Dendritic cell treated with granulocyte-macrophage colony-stimulating factor and Interleukin-4, amounts not matched to agents 40 ng/mL and 50 ng/mL, for 4 days (primary cell): ENCODE measurements at regions of chr7 and their contacts with region 1.

Region 1: GRCh38 chr7:98168181-98168905 is 42.9 kb upstream of the BHLHA15 start:
- H3K4me3 Mint-ChIP-seq: no peak overlapping the region
- H3K27ac Mint-ChIP-seq: no peak overlapping the region
- H3K4me1 Mint-ChIP-seq: peaks cover 29% of the 10 kb centered on the region
- H3K27me3 Mint-ChIP-seq: peaks cover 40% of the 10 kb centered on the region

Region 2: GRCh38 chr7:97006036-97006815 is 1162.1 kb before region 1 on chr7:
- intact Hi-C with region 1: no loop called
- H3K4me3 Mint-ChIP-seq: peak overlapping the region; percentile 67
- H3K27ac Mint-ChIP-seq: no peak overlapping the region
- H3K4me1 Mint-ChIP-seq: peaks cover 12% of the 10 kb centered on the region
- H3K27me3 Mint-ChIP-seq: peaks cover 93% of the 10 kb centered on the region

Region 3: GRCh38 chr7:98021588-98022351 is 146.6 kb before region 1 on chr7:
- intact Hi-C with region 1: loop called (anchors 1 kb)
- H3K4me3 Mint-ChIP-seq: no peak overlapping the region
- H3K27ac Mint-ChIP-seq: no peak overlapping the region
- H3K4me1 Mint-ChIP-seq: peaks cover 11% of the 10 kb centered on the region
- H3K27me3 Mint-ChIP-seq: peaks cover 32% of the 10 kb centered on the region

Region 4: DNA sequence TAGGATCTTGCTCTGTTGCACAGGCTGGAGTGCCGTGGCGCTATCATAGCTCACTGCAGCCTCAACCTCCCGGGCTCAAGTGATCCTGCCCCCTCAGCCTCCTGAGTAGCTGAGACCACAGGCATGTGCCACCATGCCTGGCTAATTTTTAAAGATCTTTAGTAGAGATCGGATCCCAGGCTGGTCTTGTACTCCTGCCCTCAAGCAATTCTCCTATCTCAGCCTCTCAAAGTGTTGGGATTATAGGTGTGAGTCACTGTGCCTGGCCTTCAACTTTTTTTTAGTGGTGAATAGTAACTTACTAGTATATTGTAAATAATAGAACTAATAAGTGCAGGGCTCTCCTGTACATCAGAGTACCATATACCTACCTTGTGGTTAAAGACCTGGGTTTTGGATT is 113.8 kb before region 1 on chr7:
- intact Hi-C with region 1: no loop called
- H3K4me3 Mint-ChIP-seq: no peak overlapping the region
- H3K27ac Mint-ChIP-seq: no peak overlapping the region
- H3K4me1 Mint-ChIP-seq: no peaks in the 10 kb centered on the region
- H3K27me3 Mint-ChIP-seq: peaks cover 31% of the 10 kb centered on the region

Region 5: DNA sequence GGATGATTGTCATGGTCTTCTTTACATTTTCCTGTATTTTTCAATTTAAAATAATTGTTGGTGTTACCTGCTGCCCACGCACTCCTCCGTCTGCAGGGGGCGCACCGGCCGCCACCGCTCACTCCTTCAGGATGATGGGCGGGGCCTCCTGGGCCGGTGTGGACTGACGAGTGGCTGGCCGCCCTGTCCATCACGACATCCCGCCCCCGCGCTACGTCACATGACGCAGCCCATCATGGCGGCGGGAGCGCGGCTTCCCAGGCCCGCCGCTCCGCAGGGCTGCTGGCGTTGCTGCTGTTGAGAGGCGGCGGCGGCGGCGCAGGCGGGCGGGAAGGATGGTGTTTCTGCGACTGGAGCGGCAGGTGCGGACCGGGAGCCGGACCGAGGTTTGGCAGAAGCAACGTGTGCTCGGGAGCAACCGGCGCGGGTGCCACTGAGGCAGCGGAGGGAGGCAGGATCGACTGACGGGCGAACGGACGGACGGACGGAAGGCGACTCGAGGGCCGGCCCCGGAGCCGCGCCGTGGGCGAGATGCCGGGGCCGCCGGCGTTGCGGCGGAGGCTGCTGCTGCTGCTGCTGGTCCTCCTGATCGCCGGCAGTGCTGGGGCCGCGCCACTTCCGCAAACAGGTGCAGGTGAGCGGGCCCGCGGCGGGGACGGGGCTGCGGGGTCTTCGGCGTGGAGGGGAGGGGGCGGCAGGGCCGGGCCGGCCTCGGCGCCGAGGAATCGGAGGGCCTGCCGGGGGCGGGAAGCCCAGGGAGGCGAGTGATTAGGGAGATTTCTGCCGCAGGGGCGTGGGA is 61.5 kb before region 1 on chr7 and contains the start of gene LMTK2:
- intact Hi-C with region 1: loop called (anchors 1 kb)
- H3K4me3 Mint-ChIP-seq: peak within 1 kb of the TSS; percentile 99
- H3K27ac Mint-ChIP-seq: peak within 1 kb of the TSS; percentile 94
- H3K4me1 Mint-ChIP-seq: peaks cover 11% of the 10 kb centered on the region
- H3K27me3 Mint-ChIP-seq: peaks cover 82% of the 10 kb centered on the region

Region 6: GRCh38 chr7:98126311-98127142 is 41.8 kb before region 1 on chr7:
- intact Hi-C with region 1: loop called (anchors 5 kb)
- H3K4me3 Mint-ChIP-seq: no peak overlapping the region
- H3K27ac Mint-ChIP-seq: no peak overlapping the region
- H3K4me1 Mint-ChIP-seq: peaks cover 67% of the 10 kb centered on the region
- H3K27me3 Mint-ChIP-seq: peaks cover 90% of the 10 kb centered on the region

Region 7: DNA sequence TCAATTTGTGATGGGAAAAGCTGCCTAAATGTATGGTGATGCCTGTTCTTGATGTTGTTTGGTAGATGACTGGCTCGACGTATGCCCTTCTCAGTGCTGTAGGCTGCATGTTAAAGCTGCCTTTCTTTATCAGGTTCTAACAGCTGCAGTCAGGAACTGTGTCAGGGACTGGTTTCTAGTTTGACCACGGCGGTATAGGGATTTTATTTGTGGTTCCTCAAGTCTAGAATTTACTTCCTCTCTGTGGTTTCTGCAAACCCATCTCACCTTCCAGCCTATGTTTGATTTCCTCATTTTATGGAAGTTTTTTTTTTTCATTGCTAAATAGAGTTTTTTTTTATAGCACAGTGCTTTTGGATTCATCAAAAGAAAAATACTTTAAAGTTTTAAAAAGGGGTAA is 35.2 kb before region 1 on chr7:
- intact Hi-C with region 1: loop called (anchors 2 kb)
- H3K4me3 Mint-ChIP-seq: no peak overlapping the region
- H3K27ac Mint-ChIP-seq: peak overlapping the region; percentile 50
- H3K4me1 Mint-ChIP-seq: peaks cover 79% of the 10 kb centered on the region
- H3K27me3 Mint-ChIP-seq: peaks cover 55% of the 10 kb centered on the region